ENCODE measurements at regions of chr4 and their contacts with region 1.

Region 1: DNA sequence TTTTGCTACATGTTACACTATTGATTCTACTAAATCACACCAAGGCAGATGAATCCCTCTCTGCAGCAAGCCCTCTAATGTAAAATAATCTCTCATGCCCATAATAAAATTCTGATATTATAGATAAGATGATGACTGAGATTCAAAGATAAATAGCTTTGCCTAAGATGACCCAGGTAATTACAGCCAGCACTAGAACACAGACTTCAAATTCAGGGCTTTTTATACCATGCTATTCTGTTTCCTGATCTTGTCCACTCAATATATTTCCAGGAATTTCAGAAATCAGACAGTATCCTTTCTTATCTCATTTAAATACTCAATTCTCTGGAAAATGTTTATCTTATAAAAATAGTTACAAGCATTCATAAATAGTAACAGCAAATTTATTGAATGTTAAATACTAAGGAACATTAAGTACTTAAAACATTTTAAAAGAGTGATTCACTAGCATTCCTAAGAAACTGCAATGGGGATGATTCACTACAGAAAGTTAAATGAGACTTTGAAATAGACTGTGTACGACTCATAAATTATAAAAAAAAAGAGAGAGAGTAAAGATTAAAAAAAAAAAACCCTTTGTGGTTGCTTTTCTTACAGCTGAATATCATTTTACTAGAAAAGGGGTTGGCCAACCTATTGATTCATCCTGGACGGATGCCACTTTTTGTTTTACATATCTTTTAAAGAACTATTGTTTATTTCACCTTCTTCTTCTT is 45.8 kb upstream of the IL21 start:
- DNase-seq: peak; percentile 34
- H3K4me3 Mint-ChIP-seq: peak overlapping the region; percentile 45
- H3K27ac Mint-ChIP-seq: peak overlapping the region; percentile 96
- H3K4me1 Mint-ChIP-seq: peaks cover 82% of the 10 kb centered on the region
- H3K27me3 Mint-ChIP-seq: no peaks in the 10 kb centered on the region

Region 2: GRCh38 chr4:122542411-122543236 is 124.1 kb before region 1 on chr4:
- CTCF ChIA-PET with region 1: no interaction called
- intact Hi-C with region 1: loop called (anchors 1 kb)
- DNase-seq: no peak
- H3K4me3 Mint-ChIP-seq: peak overlapping the region; percentile 52
- H3K27ac Mint-ChIP-seq: peak overlapping the region; percentile 100
- H3K4me1 Mint-ChIP-seq: peaks cover 94% of the 10 kb centered on the region
- H3K27me3 Mint-ChIP-seq: no peaks in the 10 kb centered on the region

Region 3: DNA sequence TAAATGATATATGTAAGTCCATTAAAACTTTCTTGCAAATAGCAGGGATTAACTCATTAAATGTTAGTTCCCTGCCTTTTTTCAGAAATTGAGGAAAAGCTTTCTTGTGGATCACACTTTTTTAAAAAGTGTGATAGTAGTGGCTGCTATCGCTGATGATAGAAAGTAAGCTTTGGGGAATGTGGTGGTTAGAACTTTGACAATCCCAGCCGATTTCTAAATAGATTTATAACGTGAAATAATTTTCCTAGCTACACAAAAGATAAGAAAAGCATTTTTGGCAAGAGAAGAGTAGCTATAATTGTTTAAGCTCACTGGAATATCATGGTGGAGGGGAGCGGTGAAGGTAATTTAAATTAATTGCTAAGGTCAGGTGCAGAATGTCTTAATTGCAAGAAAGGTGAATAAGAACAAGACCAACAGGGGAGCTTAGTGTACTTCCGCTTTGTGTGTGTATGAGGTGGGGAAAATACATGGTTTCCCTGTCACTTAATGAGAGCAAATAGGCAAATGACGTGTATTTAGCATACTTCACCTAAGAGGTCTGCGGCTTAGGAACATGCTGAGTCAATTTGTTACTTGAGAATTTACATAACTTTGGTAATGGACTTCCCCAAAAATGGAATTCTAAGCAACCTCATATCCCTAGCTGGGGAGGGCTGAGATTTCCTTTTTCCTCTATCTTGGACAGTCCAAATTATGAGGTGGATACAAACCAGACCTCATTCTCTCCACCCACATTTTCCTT is 34.1 kb before region 1 on chr4:
- CTCF ChIA-PET with region 1: interaction called, 3 read pairs
- intact Hi-C with region 1: loop called (anchors 2 kb)
- DNase-seq: no peak
- H3K4me3 Mint-ChIP-seq: no peak overlapping the region
- H3K27ac Mint-ChIP-seq: no peak overlapping the region
- H3K4me1 Mint-ChIP-seq: peaks cover 45% of the 10 kb centered on the region
- H3K27me3 Mint-ChIP-seq: peaks cover 2% of the 10 kb centered on the region

Region 4: DNA sequence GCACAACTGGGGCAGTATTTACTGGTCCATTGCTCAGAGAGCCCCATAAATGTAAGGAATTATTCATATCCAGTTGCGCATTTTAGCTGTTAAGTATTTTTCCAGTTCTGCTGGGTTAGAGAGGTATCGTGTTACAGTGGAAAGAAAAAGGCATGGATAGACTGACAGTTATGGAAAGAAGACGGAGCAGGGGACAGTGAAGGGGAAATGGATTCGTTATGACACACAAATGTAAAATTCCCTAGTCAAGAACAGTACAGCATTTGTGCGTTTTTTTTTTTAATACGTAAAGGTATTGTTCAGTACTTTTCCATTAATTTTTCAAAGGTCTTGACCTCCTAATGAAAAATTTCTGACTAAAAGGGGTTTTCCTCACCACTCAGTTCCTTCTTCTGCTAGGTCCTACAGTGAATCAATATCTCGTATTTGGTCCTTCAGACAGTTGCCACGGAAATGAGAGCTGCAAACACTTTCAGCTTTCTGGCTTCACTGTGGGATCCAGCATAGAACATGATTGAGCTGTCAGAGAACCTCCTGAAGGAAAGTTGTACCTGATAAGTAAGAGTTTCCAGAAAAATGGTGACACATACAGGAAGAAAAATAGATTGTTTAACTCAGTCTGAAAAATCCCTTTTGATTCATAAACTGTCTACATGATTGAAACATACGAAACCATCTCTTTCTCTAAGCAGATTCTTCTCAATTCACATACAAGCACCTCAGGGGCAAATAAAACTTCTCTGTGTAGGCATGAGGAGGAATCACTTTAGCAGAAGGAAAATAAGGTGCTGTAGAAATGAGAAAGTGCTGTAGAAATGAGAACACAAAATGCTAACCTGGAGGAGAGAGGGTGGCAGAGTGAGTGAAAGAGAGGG is 44.0 kb after region 1 on chr4:
- CTCF ChIA-PET with region 1: interaction called, 11 read pairs
- intact Hi-C with region 1: loop called (anchors 1 kb)
- DNase-seq: peak; percentile 79
- H3K4me3 Mint-ChIP-seq: peak overlapping the region; percentile 54
- H3K27ac Mint-ChIP-seq: peak overlapping the region; percentile 96
- H3K4me1 Mint-ChIP-seq: peaks cover 80% of the 10 kb centered on the region
- H3K27me3 Mint-ChIP-seq: no peaks in the 10 kb centered on the region

Region 5: DNA sequence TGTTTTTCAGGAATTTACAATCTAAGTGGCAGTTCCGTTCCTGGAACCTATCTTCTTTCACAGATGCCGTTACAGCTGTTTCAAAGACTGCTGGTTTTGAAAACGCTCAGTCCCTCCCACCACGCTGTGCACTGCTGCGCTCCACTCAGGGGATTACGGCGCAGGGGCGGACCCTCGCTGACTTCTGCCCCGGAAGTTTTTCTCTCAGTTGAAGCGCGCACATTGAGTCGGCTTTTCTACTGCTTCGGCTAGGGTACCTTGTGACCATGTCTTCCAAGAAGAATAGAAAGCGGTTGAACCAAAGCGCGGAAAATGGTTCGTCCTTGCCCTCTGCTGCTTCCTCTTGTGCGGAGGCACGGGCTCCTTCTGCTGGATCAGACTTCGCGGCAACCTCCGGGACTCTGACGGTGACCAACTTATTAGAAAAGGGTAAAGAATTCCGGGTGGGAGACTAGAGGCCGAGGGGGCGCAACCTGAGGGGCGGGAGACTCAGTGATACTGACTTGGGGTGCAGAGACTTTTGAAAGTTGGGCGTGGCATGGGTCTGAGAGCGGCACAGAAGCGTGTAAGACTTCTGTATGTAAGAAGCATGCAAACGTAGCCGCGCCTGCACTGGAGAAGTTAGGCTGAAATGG is 256.3 kb after region 1 on chr4:
- CTCF ChIA-PET with region 1: interaction called, 5 read pairs
- intact Hi-C with region 1: loop called (anchors 5 kb)
- DNase-seq: peak; percentile 94
- H3K4me3 Mint-ChIP-seq: peak overlapping the region; percentile 99
- H3K27ac Mint-ChIP-seq: peak overlapping the region; percentile 87
- H3K4me1 Mint-ChIP-seq: peaks cover 11% of the 10 kb centered on the region
- H3K27me3 Mint-ChIP-seq: peaks cover 2% of the 10 kb centered on the region

Measured in activated naive CD4-positive, alpha-beta T cell treated with anti-CD3 and anti-CD28 coated beads for 36 hours (primary cell).